ENCODE measurements at regions of chr12 and their contacts with region 1.

Region 1: DNA sequence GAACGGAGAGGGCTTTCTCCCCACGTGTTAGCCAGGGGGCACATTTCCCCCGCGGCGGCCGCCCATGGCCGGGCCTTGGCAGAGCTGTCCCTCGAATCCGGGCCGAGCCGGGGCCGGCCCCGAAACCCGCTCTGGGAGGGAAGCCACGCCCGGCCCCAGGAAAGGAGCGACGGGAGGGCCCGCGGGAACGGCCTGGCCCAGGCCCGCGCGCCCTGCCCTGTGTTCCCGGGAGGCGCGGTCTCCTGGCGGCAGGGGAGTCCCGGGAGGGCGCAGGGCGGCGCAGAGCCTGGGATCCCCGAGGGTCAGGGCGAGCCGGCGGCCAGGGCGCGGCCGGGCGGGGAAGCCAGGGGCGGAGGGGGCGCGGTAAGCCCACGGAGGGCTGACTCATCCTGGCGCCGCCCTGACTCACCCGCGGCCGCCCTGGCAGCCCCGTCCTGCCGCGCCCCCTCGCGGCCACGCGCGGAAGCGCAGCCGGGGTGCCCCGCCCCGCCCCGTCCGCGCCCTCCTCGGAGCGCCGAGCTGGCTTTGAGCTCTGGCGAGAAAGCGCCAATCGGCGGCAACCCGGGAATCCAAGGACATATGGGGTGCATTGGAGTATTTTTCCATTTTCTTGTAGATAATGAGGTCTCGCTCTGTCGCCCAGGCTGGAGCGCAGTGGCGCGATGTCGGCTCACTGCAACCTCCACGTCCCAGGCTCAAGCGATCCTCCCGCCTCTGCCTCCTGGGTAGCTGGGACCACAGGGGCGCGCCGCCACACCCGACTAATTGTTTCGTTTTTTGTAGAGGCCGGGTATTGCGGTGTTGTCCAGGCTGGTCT is 31.8 kb upstream of the PLEKHG6 start:
- DNase-seq: peak; percentile 87 to 99
- H3K4me3 ChIP-seq: peak overlapping the region; percentile 70
- H3K27ac ChIP-seq: peak overlapping the region; percentile 97
- H3K4me1 ChIP-seq: peaks cover 78% of the 10 kb centered on the region
- H3K27me3 ChIP-seq: no peaks in the 10 kb centered on the region
- CTCF ChIP-seq: peak; percentile 69

Region 2: DNA sequence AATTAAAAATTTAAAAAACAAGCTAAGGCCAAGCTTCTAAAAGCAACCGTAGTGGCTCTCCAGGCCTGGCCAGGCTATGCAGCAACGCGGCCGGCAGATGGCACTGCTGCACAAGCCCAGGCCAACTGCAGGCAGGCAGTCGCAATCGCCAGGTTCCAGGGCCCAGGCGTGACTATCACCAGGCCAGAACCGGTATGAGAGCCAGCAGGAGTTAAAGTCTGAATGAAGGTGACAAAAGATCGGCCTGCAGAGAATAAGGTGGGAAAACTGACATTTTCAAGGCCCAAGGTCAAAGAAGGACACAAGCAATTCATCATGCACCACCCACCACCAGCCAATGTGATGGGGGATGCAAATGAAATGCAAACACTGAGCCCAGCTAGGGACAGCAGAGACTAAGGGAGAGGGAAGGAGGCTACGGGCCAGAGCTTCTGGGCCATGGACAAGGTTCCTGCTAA is 290.0 kb before region 1 on chr12:
- CTCF ChIA-PET with region 1: interaction called, 13 read pairs
- POLR2A ChIA-PET with region 1: no interaction called
- intact Hi-C with region 1: no loop called
- DNase-seq: peak; percentile 50 to 86
- H3K4me3 ChIP-seq: no peak overlapping the region
- H3K27ac ChIP-seq: no peak overlapping the region
- H3K4me1 ChIP-seq: no peaks in the 10 kb centered on the region
- H3K27me3 ChIP-seq: peaks cover 35% of the 10 kb centered on the region
- CTCF ChIP-seq: peak; percentile 99

Region 3: GRCh38 chr12:6092784-6093722 is 185.6 kb before region 1 on chr12:
- CTCF ChIA-PET with region 1: no interaction called
- POLR2A ChIA-PET with region 1: interaction called, 9 read pairs
- intact Hi-C with region 1: loop called (anchors 1 kb)
- DNase-seq: peak; percentile 97
- H3K4me3 ChIP-seq: peak overlapping the region; percentile 37
- H3K27ac ChIP-seq: peak overlapping the region; percentile 80
- H3K4me1 ChIP-seq: peaks cover 59% of the 10 kb centered on the region
- H3K27me3 ChIP-seq: no peaks in the 10 kb centered on the region
- CTCF ChIP-seq: no peak; the same call in 1 of the 2 replicates

Region 4: DNA sequence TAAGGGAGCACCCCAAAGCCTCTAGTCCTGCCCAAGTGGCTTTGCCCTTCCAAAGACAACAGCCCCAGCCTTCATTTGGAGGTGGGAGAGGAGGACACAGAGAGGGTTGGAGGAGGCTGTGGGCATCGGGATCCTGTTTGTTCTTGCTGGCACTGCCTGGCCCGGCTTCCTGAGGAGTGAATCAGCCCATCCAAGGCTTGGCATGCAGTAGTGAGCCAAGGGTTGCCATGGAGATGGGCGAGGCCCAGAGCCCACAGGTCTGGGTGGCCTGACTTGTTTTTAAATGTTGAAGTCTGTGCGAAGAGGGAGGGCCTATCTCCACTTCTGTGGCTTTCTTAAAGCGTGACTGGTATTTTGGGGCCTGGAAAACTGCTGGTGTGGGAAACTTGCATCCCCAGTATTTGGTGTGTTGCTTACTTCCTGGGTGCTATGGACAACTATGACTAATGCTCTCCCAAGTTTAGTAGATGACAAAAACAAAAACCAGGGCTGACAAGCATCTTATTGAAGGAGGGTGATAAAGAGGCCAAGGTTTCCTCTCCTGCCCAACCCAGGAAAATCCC is 62.6 kb before region 1 on chr12:
- CTCF ChIA-PET with region 1: interaction called, 14 read pairs
- POLR2A ChIA-PET with region 1: interaction called, 8 read pairs
- intact Hi-C with region 1: loop called (anchors 1 kb)
- DNase-seq: peak; percentile 99 to 100
- H3K4me3 ChIP-seq: peak overlapping the region; percentile 32; the same call in 1 of the 2 replicates
- H3K27ac ChIP-seq: peak overlapping the region; percentile 95
- H3K4me1 ChIP-seq: peaks cover 86% of the 10 kb centered on the region
- H3K27me3 ChIP-seq: no peaks in the 10 kb centered on the region
- CTCF ChIP-seq: no peak

Region 5: GRCh38 chr12:6257007-6257406 is 21.6 kb before region 1 on chr12:
- CTCF ChIA-PET with region 1: no interaction called
- POLR2A ChIA-PET with region 1: no interaction called
- intact Hi-C with region 1: no loop called
- DNase-seq: no peak
- H3K4me3 ChIP-seq: no peak overlapping the region
- H3K27ac ChIP-seq: no peak overlapping the region
- H3K4me1 ChIP-seq: 0 out of 2 replicates have a peak, but pooled peaks cover 1% of the 10 kb centered on the region
- H3K27me3 ChIP-seq: no peaks in the 10 kb centered on the region
- CTCF ChIP-seq: no peak

Region 6: GRCh38 chr12:6312529-6313325 is 34.1 kb after region 1 on chr12:
- CTCF ChIA-PET with region 1: no interaction called
- POLR2A ChIA-PET with region 1: interaction called, 7 read pairs
- intact Hi-C with region 1: loop called (anchors 2 kb)
- DNase-seq: peak; percentile 96
- H3K4me3 ChIP-seq: peak overlapping the region; percentile 33; the same call in 1 of the 2 replicates
- H3K27ac ChIP-seq: peak overlapping the region; percentile 97
- H3K4me1 ChIP-seq: peaks cover 54% of the 10 kb centered on the region
- H3K27me3 ChIP-seq: no peaks in the 10 kb centered on the region
- CTCF ChIP-seq: no peak

Region 7: GRCh38 chr12:6383572-6384498 is 105.2 kb after region 1 on chr12 and contains the start of gene LTBR:
- CTCF ChIA-PET with region 1: no interaction called
- POLR2A ChIA-PET with region 1: interaction called, 12 read pairs
- intact Hi-C with region 1: no loop called
- DNase-seq: peak; percentile 88 to 99
- H3K4me3 ChIP-seq: peak within 1 kb of the TSS; percentile 77
- H3K27ac ChIP-seq: peak within 1 kb of the TSS; percentile 69
- H3K4me1 ChIP-seq: peaks cover 29% of the 10 kb centered on the region
- H3K27me3 ChIP-seq: no peaks in the 10 kb centered on the region
- CTCF ChIP-seq: 0 out of 2 replicates have a peak, but pooled peaks have one; percentile 20
- total RNA-seq, gene LTBR: 178 and 185 TPM in 2 replicates

Region 8: GRCh38 chr12:6493497-6494257 is 215.0 kb after region 1 on chr12 and contains the start of gene NCAPD2:
- CTCF ChIA-PET with region 1: no interaction called
- POLR2A ChIA-PET with region 1: no interaction called
- intact Hi-C with region 1: no loop called
- DNase-seq: peak; percentile 93 to 98
- H3K4me3 ChIP-seq: peak within 1 kb of the TSS; percentile 87
- H3K27ac ChIP-seq: peak within 1 kb of the TSS; percentile 85
- H3K4me1 ChIP-seq: peaks cover 24% of the 10 kb centered on the region
- H3K27me3 ChIP-seq: no peaks in the 10 kb centered on the region
- CTCF ChIP-seq: peak; percentile 46; the same call in 1 of the 2 replicates
- total RNA-seq, gene NCAPD2: 220 and 266 TPM in 2 replicates

Measured in PC-9 (cell line).